Activated CD4-positive, alpha-beta T cell treated with anti-CD3 and anti-CD28 coated beads for 36 hours (primary cell): ENCODE measurements at regions of chr11 and their contacts with region 1.

Region 1: GRCh38 chr11:122690801-122691548 is 35.5 kb downstream of the UBASH3B start:
- DNase-seq: peak; percentile 35
- ATAC-seq: peak; percentile 16
- H3K4me3 Mint-ChIP-seq: peak overlapping the region; percentile 46
- H3K27ac Mint-ChIP-seq: peak overlapping the region; percentile 80
- H3K4me1 Mint-ChIP-seq: peaks cover 79% of the 10 kb centered on the region
- H3K27me3 Mint-ChIP-seq: no peaks in the 10 kb centered on the region

Region 2: DNA sequence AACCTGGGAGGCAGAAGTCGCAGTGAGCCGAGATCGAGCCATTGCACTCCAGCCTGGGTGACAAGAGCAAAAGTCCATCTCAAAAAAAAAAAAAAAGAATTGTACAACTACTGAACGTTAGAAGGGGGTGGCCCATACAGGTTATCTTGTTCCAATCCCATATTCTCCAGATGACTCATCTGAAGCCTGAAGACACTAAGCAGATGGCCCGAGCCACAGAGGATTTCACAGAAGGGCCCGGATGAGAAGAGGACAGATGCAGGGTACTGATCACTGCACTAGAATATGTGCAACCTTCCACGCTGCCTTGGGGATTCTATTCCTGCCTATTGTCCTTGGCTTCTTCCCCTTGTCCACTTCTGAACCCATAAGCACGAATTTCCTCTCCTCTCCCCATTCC is 106.3 kb before region 1 on chr11:
- CTCF ChIA-PET with region 1: interaction called, 3 read pairs
- POLR2A ChIA-PET with region 1: no interaction called
- intact Hi-C with region 1: loop called in 1 of 2 experiments (anchors 5 kb)
- DNase-seq: no peak
- ATAC-seq: no peak
- H3K4me3 Mint-ChIP-seq: no peak overlapping the region
- H3K27ac Mint-ChIP-seq: no peak overlapping the region
- H3K4me1 Mint-ChIP-seq: peaks cover 8% of the 10 kb centered on the region
- H3K27me3 Mint-ChIP-seq: peaks cover 2% of the 10 kb centered on the region

Region 3: DNA sequence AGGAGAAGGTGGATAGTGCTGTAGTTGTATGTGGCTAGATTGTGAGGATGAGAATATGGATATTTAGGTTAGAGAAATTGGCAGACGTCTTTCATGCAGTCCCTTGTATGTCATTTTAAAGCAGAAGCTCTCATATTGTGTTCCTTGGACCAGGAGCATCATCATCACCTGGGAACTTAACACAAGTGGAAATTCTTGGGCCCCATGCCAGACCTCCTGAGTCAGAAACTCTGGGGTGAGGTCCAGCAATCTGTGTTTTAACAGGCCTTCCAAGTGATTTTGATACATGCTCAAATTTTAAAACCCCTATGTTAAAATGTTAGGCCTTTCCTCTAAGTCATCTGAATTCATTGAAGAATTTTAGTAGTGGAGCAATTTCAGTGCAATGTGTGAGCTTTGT is 226.3 kb after region 1 on chr11:
- CTCF ChIA-PET with region 1: no interaction called
- POLR2A ChIA-PET with region 1: no interaction called
- intact Hi-C with region 1: no loop called
- DNase-seq: no peak
- ATAC-seq: no peak
- H3K4me3 Mint-ChIP-seq: no peak overlapping the region
- H3K27ac Mint-ChIP-seq: no peak overlapping the region
- H3K4me1 Mint-ChIP-seq: no peaks in the 10 kb centered on the region
- H3K27me3 Mint-ChIP-seq: no peaks in the 10 kb centered on the region